ENCODE measurements at regions of chr3 and their contacts with region 1.

Region 1: DNA sequence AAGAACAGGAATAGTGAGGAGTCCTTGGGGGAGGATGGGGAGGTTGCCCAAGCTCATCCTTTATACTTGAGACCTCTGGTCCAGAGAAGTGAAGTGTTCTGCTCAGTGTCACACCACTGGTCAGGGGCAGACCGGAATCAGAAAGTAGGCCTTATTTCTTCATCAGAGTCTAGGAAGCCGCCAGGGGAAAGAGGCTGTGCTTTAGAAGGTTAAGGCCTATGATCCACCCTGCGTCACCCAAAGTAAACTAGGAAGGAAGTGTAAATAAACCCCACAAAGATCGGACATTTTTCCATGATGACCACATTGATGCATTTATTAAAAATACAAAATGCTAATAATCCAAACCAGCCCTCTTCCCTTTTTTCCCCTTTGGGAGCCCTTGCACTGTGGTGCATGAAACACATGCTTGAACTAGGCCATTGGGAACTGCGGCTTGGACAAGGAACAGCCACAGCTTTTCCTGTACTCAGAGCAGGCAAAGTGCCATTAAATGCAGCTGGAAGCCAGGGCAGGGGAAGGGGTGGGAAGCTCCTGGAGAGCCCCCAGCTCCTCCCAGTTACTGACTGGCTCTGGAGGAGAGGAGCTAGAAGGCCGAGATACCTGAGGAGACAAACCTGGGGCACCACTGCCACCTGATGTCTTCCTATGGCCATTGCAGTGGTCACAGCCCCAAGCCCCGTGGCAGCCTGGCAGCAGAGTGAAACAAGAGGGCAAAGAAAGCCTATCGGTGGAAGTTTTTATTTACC is 37.0 kb downstream of the CDC25A start:
- DNase-seq: peak; percentile 57 to 74
- ATAC-seq: peak; percentile 99

Region 2: GRCh38 chr3:47824541-47825473 is 326.4 kb before region 1 on chr3:
- intact Hi-C with region 1: loop called (anchors 10 kb)
- DNase-seq: peak; percentile 60 to 81
- ATAC-seq: peak; percentile 99

Region 3: GRCh38 chr3:47836986-47837385 is 314.2 kb before region 1 on chr3:
- intact Hi-C with region 1: loop called in 1 of 2 experiments (anchors 10 kb)
- DNase-seq: no peak
- ATAC-seq: no peak

Region 4: GRCh38 chr3:47989981-47990440 is 161.2 kb before region 1 on chr3:
- intact Hi-C with region 1: loop called in 1 of 2 experiments (anchors 2 kb)
- DNase-seq: peak; percentile 60 to 68
- ATAC-seq: peak; percentile 92